ENCODE measurements at regions of chr13 and their contacts with region 1.

Region 1: GRCh38 chr13:24160454-24161009 is at the start of gene SPATA13:
- DNase-seq: peak; percentile 96 to 98 (median 98)
- ATAC-seq: peak; percentile 99
- H3K4me3 ChIP-seq: peak within 1 kb of the TSS; percentile 87
- H3K27ac ChIP-seq: peak within 1 kb of the TSS; percentile 32
- H3K4me1 ChIP-seq: peaks cover 3% of the 10 kb centered on the region
- H3K27me3 ChIP-seq: no peaks in the 10 kb centered on the region
- total RNA-seq, gene SPATA13: 8.8 to 10.6 (median 9.6) TPM

Region 2: GRCh38 chr13:24038841-24039330 is 121.6 kb before region 1 on chr13:
- intact Hi-C with region 1: no loop called
- DNase-seq: no peak
- ATAC-seq: peak; percentile 44 to 65
- H3K4me3 ChIP-seq: no peak overlapping the region
- H3K27ac ChIP-seq: peak overlapping the region; percentile 39
- H3K4me1 ChIP-seq: no peaks in the 10 kb centered on the region
- H3K27me3 ChIP-seq: no peaks in the 10 kb centered on the region

Region 3: GRCh38 chr13:24053519-24054251 is 106.8 kb before region 1 on chr13:
- intact Hi-C with region 1: loop called in 1 of 4 experiments (anchors 10 kb)
- DNase-seq: peak; percentile 41 to 68 (median 65)
- ATAC-seq: peak; percentile 83 to 85
- H3K4me3 ChIP-seq: no peak overlapping the region
- H3K27ac ChIP-seq: peak overlapping the region; percentile 34
- H3K4me1 ChIP-seq: no peaks in the 10 kb centered on the region
- H3K27me3 ChIP-seq: no peaks in the 10 kb centered on the region